ENCODE measurements at regions of chr2 and their contacts with region 1.

Region 1: DNA sequence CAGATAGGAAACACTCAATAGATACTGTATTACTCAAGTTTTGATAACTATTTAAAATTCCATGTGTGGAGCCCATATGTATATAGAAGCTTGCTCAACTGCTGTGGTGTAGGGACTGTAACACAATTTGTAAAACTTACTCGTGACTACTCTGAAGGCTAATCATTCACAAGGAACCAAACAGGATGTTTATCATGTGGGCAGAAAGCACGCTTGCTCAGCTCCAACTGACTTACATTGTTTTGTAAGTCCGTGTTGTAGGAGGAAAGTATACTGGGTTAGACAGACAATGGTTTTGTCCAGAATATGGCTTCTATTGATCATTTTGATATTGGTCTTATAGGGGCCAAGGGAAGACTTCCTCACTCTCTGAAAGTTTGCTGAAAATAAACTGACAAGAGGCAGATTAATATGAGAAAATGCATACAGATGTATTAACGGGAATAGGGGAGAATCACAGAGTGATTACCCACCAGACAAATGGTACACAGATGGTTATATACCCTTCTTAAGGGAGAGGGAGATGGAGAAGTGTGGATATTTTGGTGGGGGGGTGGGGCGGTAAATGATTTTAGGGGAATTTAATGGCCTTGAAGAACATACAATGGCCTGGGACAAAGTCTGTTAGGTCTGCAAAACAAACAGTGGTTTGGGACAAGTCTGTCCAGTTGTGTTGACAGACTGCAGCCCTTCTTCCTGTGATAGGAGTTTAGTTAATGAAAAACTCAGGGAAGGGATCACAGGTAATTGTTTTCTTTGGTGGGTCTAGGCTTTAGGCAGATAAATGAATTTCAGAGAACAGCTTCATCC is 259.3 kb upstream of the SP5 start:
- DNase-seq: peak; percentile 98
- ATAC-seq: peak; percentile 93
- H3K4me3 ChIP-seq: peak overlapping the region in 2 of 3 experiments; percentile 23 to 43; a peak in 3 of 6 replicates
- H3K27ac ChIP-seq: peak overlapping the region; percentile 84
- H3K4me1 ChIP-seq: peaks cover 75% of the 10 kb centered on the region
- H3K27me3 ChIP-seq: no peaks in the 10 kb centered on the region
- CTCF ChIP-seq: 0 out of 2 replicates have a peak, but pooled peaks have one; percentile 3
- EP300 ChIP-seq: peak; percentile 75 to 99; a peak in 3 of 4 replicates
- POLR2A ChIP-seq: peak; percentile 43 to 67; a peak in 3 of 4 replicates
- RAD21 ChIP-seq: 0 out of 2 replicates have a peak, but pooled peaks have one; percentile 29

Region 2: GRCh38 chr2:169808221-169808620 is 647.6 kb before region 1 on chr2:
- CTCF ChIA-PET with region 1: no interaction called
- POLR2A ChIA-PET with region 1: no interaction called
- in situ Hi-C with region 1: no loop called
- intact Hi-C with region 1: no loop called
- DNase-seq: no peak
- ATAC-seq: no peak
- H3K4me3 ChIP-seq: no peak overlapping the region
- H3K27ac ChIP-seq: no peak overlapping the region
- H3K4me1 ChIP-seq: peaks cover 10% of the 10 kb centered on the region
- H3K27me3 ChIP-seq: no peaks in the 10 kb centered on the region
- CTCF ChIP-seq: no peak
- EP300 ChIP-seq: no peak
- POLR2A ChIP-seq: no peak
- RAD21 ChIP-seq: no peak

Region 3: DNA sequence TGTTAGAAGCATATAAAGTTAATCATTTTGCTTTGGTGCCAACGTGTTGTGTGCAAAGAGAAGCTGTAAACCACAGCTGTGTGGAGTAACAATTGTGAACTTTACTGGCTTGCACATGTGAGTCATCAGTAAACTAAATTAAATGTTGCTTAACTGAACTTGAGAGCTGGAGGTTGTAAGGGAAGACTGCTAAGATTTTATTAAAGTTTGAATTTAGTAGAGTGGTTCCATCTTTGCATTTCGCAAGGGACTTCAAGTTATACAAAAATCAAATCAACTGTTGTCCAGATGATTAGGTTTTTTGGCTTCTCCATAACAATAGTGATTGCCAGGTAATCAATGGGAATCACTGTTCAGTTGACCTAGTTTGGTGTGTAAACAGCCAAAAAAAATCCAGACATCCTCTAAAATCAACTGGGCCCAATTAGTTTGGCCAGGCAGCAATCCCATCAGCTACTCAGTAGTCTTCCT is 30.5 kb before region 1 on chr2:
- CTCF ChIA-PET with region 1: no interaction called
- POLR2A ChIA-PET with region 1: interaction called, 14 read pairs
- in situ Hi-C with region 1: no loop called
- intact Hi-C with region 1: no loop called
- DNase-seq: peak; percentile 25
- ATAC-seq: peak; percentile 59
- H3K4me3 ChIP-seq: no peak overlapping the region
- H3K27ac ChIP-seq: no peak overlapping the region
- H3K4me1 ChIP-seq: peaks cover 26% of the 10 kb centered on the region
- H3K27me3 ChIP-seq: peaks cover 0 to 16% of the 10 kb centered on the region in 2 experiments; a peak in 2 of 5 replicates
- CTCF ChIP-seq: no peak
- EP300 ChIP-seq: no peak
- POLR2A ChIP-seq: no peak
- RAD21 ChIP-seq: no peak

Measured in HepG2 (cell line).